BJ (cell line): ENCODE measurements at regions of chr20 and their contacts with region 1.

Region 1: GRCh38 chr20:62900052-62900691 is 26.1 kb downstream of the DIDO1 start:
- DNase-seq: no peak
- H3K4me3 ChIP-seq: no peak overlapping the region
- H3K27me3 ChIP-seq: no peaks in the 10 kb centered on the region
- CTCF ChIP-seq: peak; percentile 98

Region 2: DNA sequence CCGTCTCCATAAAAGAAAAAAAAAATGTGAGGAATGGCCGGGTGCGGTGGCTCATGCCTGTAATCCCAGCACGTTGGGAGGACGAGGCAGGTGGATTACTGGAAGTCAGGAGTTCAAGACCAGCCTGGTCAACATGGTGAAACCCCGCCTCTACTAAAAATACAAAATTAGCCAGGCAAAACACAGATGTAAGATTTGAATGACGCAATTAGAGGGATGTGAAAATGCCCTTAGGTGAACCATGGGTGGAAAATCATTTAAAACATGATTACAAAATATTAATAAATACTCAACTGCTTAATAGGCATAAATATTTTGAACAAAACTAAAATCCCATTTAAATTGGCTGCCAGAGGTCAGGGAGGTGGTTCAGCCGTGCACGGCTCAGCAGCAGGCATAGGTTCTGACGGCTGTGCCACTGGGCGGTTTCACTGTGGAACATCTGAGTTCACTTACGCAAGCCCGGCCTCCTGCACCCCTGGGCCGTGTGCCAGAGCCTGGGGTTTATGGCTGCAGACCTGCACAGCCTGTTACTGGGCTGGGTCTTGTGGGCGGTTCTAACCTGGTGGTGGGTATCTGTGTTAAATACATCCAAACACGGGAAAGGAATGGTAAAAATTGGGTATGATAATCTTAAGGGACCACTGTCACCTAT is 62.2 kb before region 1 on chr20:
- CTCF ChIA-PET with region 1: no interaction called
- POLR2A ChIA-PET with region 1: no interaction called
- DNase-seq: no peak
- H3K4me3 ChIP-seq: no peak overlapping the region
- H3K27me3 ChIP-seq: peaks cover 3% of the 10 kb centered on the region; the same call in 1 of the 2 replicates
- CTCF ChIP-seq: no peak

Region 3: GRCh38 chr20:62861726-62862336 is 38.3 kb before region 1 on chr20 and contains the start of gene TCFL5:
- CTCF ChIA-PET with region 1: no interaction called
- POLR2A ChIA-PET with region 1: no interaction called
- DNase-seq: no peak
- H3K4me3 ChIP-seq: peak within 1 kb of the TSS; percentile 59
- H3K27me3 ChIP-seq: no peaks in the 10 kb centered on the region
- CTCF ChIP-seq: no peak
- polyA plus RNA-seq, gene TCFL5: 8.5 and 12.2 TPM in 2 replicates

Region 4: DNA sequence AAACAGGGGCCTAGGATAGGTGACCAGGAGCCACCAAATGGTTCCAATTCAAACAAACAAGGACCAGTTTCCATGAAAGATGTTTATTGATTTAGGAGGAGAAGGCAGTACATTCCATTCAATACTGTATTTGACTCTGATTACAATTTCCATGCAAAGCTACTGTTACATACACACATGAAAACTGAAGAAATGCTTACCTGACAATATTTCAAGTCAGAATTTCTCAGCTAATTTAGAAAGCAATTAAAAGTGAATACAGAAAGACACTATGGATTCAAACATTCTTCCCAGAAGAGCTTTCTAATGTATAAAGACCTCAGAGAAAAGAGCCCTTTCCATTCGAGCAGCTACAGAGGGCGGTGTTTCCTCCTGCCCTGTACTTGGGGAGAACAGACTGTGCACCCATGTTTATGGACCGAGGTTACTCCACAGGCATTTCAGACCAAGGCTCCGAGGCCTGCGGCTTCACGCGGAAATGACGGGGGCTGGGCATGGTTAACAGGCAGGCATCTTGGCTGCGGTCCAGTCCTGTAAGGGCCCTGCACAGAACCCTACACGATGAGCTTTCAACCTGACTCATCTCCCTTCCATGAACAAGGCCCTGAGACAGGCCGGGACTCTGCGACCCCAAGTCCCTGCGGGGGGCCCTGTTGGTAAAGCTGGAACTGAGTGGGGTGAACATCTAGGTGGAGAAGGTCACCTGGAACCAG is 12.9 kb before region 1 on chr20:
- CTCF ChIA-PET with region 1: interaction called, 44 read pairs
- POLR2A ChIA-PET with region 1: no interaction called
- DNase-seq: peak; percentile 24
- H3K4me3 ChIP-seq: no peak overlapping the region
- H3K27me3 ChIP-seq: no peaks in the 10 kb centered on the region
- CTCF ChIP-seq: peak; percentile 30; the same call in 1 of the 2 replicates

Region 5: DNA sequence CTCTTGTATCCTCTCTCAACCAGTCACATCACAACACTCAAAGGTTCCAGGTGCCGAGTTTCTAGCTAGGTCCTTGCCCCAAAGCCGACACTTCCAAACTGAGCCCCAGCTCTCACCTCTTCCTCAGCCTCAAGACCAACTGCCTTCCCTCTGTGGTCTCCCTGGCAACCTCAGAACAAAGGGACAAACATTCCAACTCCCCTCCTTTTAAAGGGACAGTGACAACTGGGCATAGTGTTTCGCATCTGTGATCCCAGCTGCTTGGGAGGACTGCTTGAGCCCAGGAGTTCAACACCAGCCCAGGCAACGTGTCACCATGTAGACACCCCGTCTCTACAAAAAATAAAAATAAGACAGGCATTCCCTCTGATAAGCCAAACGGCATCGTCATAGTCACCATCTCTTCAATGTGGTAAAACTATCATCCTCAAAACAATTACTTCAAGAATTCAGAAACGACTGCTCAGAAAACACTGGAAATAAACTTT is 14.8 kb after region 1 on chr20:
- CTCF ChIA-PET with region 1: interaction called, 31 read pairs
- POLR2A ChIA-PET with region 1: no interaction called
- DNase-seq: no peak
- H3K4me3 ChIP-seq: no peak overlapping the region
- H3K27me3 ChIP-seq: no peaks in the 10 kb centered on the region
- CTCF ChIP-seq: no peak